ENCODE measurements at regions of chr20 and their contacts with region 1.

Region 1: GRCh38 chr20:34111702-34112599 is at the start of gene EIF2S2:
- DNase-seq: peak; percentile 97
- ATAC-seq: peak; percentile 93
- H3K4me3 Mint-ChIP-seq: peak within 1 kb of the TSS; percentile 98
- H3K27ac Mint-ChIP-seq: peak within 1 kb of the TSS; percentile 99
- H3K4me1 Mint-ChIP-seq: peaks cover 37% of the 10 kb centered on the region
- H3K27me3 Mint-ChIP-seq: no peaks in the 10 kb centered on the region
- CTCF ChIP-seq: no peak
- total RNA-seq, gene EIF2S2: 161 to 164 TPM

Region 2: GRCh38 chr20:33862709-33863403 is 249.1 kb before region 1 on chr20:
- CTCF ChIA-PET with region 1: interaction called, 4 read pairs
- POLR2A ChIA-PET with region 1: interaction called, 10 read pairs
- intact Hi-C with region 1: no loop called
- DNase-seq: peak; percentile 73
- ATAC-seq: peak; percentile 71
- H3K4me3 Mint-ChIP-seq: no peak overlapping the region
- H3K27ac Mint-ChIP-seq: no peak overlapping the region
- H3K4me1 Mint-ChIP-seq: peaks cover 19% of the 10 kb centered on the region
- H3K27me3 Mint-ChIP-seq: no peaks in the 10 kb centered on the region
- CTCF ChIP-seq: peak; percentile 91

Region 3: DNA sequence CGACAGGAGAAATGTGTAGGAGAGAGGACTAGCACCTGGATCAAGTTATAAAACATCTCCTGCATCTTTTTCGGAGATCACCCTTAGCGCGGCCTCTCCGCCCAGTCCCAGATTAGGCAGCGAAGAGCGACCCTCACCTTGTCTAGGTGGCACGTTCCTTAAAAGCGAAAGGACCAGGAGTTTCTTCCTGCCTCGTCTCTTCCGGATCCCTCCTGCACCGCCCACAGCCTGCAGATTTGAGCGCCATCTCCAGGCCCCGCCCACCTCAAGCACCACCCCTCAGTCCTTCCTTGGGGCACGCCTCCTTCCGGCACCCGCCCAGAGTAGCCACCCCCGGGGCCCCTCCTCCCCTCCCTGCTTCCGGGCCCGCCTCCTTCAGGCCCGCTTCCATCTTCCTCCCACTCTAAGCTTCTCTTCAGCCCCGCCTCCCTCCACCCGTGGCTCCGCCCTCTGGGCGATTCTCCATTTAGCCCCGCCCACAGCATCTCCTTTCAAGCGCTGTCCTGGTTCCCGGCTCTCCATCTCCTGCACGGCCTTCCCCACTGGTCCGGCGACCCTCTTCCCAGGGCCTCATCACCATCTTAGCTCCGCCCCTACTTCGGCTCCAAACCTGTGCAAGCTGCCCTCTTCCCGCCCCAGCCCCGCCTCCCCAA is 118.9 kb before region 1 on chr20:
- CTCF ChIA-PET with region 1: interaction called, 3 read pairs
- POLR2A ChIA-PET with region 1: interaction called, 20 read pairs
- intact Hi-C with region 1: loop called (anchors 1 kb)
- DNase-seq: peak; percentile 99
- ATAC-seq: peak; percentile 87
- H3K4me3 Mint-ChIP-seq: peak overlapping the region; percentile 98
- H3K27ac Mint-ChIP-seq: peak overlapping the region; percentile 96
- H3K4me1 Mint-ChIP-seq: peaks cover 53% of the 10 kb centered on the region
- H3K27me3 Mint-ChIP-seq: no peaks in the 10 kb centered on the region
- CTCF ChIP-seq: no peak

Region 4: GRCh38 chr20:34089655-34090345 is 22.2 kb before region 1 on chr20:
- CTCF ChIA-PET with region 1: interaction called, 11 read pairs
- POLR2A ChIA-PET with region 1: interaction called, 14 read pairs
- intact Hi-C with region 1: no loop called
- DNase-seq: no peak
- ATAC-seq: no peak
- H3K4me3 Mint-ChIP-seq: no peak overlapping the region
- H3K27ac Mint-ChIP-seq: no peak overlapping the region
- H3K4me1 Mint-ChIP-seq: peaks cover 21% of the 10 kb centered on the region
- H3K27me3 Mint-ChIP-seq: no peaks in the 10 kb centered on the region
- CTCF ChIP-seq: no peak

Region 5: GRCh38 chr20:34096699-34097420 is 15.1 kb before region 1 on chr20:
- CTCF ChIA-PET with region 1: interaction called, 11 read pairs
- POLR2A ChIA-PET with region 1: interaction called, 14 read pairs
- intact Hi-C with region 1: no loop called
- DNase-seq: no peak
- ATAC-seq: no peak
- H3K4me3 Mint-ChIP-seq: no peak overlapping the region
- H3K27ac Mint-ChIP-seq: peak overlapping the region; percentile 34
- H3K4me1 Mint-ChIP-seq: peaks cover 15% of the 10 kb centered on the region
- H3K27me3 Mint-ChIP-seq: no peaks in the 10 kb centered on the region
- CTCF ChIP-seq: no peak

Region 6: DNA sequence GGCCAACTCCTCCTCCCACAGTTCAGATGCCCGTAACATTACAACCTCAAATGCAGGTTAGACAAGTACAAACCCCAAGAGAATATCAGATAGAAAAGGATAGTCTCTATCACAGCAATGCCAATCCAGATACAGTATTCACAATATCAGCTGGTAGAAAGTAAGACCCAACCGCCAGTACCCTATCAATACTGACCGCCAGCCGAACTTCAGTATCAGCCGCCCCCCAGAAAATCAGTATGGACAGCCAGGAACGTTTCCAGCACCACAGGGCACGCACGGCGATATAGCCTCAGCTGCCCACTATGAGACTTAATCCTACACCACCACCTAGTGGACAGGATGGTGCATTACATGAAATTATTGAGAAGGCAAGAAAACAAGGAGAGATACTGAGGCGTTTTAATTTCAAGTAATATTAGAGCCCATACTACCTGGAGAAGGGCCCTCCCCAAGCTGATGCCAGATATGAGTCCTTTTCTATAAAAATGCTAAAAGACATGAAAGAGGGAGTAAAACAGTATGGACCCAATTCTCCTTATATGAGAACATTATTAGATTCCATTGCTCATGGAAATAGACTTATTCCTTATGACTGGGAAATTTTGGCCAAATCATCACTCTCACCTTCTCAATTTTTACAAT is 17.7 kb after region 1 on chr20:
- CTCF ChIA-PET with region 1: interaction called, 10 read pairs
- POLR2A ChIA-PET with region 1: interaction called, 5 read pairs
- intact Hi-C with region 1: no loop called
- DNase-seq: peak; percentile 68
- ATAC-seq: peak; percentile 98
- H3K4me3 Mint-ChIP-seq: no peak overlapping the region
- H3K27ac Mint-ChIP-seq: no peak overlapping the region
- H3K4me1 Mint-ChIP-seq: peaks cover 10% of the 10 kb centered on the region
- H3K27me3 Mint-ChIP-seq: peaks cover 5% of the 10 kb centered on the region
- CTCF ChIP-seq: peak; percentile 93

Measured in activated CD8-positive, alpha-beta T cell treated with anti-CD3 and anti-CD28 coated beads for 36 hours (primary cell).